PC-3 (cell line): ENCODE measurements at regions of chr10 and their contacts with region 1.

Region 1: GRCh38 chr10:52451817-52452216 is 137.7 kb downstream of the DKK1 start:
- DNase-seq: peak; percentile 100
- ATAC-seq: peak; percentile 65
- H3K4me3 ChIP-seq: peak overlapping the region; percentile 62
- H3K27ac ChIP-seq: peak overlapping the region; percentile 80
- H3K4me1 ChIP-seq: peaks cover 86% of the 10 kb centered on the region
- H3K27me3 ChIP-seq: no peaks in the 10 kb centered on the region
- CTCF ChIP-seq: no peak

Region 2: DNA sequence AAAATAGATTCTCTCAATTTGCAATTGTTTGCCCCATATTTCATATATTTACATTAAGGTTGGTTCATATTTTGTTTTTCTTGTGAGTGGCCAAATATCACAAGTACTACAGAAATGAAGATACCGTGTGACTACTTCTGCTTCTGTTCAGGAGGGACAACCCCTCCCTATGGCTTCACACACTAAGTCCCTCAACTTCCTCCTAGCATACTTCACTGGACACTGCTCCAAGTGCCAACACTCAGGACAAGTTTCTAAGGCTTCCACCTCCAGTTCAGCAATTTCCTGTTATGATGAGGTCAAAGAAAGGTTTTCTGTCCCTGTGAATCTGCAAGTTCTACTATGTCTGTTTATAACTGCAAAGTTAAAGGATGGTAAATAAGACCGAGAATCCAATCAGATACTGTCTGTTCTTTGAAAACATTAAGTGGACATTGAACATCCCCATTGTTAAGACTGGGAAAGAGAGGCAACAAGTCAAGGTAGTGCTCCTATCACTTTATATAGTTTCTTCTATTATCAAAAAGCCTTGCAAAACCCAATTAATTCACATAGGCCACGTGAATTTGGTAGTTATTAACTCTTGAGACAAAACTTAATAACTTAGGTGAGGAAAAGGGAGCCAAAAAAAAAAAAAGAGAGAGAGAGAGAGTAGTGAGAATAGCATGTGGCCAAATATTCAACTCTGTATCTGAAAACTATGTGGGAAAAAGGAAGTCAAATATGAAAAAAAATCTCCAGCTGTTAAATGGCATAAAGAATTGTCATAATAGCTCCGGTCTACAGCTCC is 219.1 kb before region 1 on chr10:
- CTCF ChIA-PET with region 1: no interaction called
- POLR2A ChIA-PET with region 1: no interaction called
- intact Hi-C with region 1: no loop called
- DNase-seq: peak; percentile 46
- ATAC-seq: peak; percentile 76
- H3K4me3 ChIP-seq: peak overlapping the region; percentile 61
- H3K27ac ChIP-seq: peak overlapping the region; percentile 14
- H3K4me1 ChIP-seq: peaks cover 25% of the 10 kb centered on the region
- H3K27me3 ChIP-seq: no peaks in the 10 kb centered on the region
- CTCF ChIP-seq: no peak

Region 3: GRCh38 chr10:52334595-52334994 is 117.2 kb before region 1 on chr10:
- CTCF ChIA-PET with region 1: no interaction called
- POLR2A ChIA-PET with region 1: interaction called, 25 read pairs
- intact Hi-C with region 1: no loop called
- DNase-seq: peak; percentile 93
- ATAC-seq: peak; percentile 53
- H3K4me3 ChIP-seq: 0 out of 2 replicates have a peak overlapping the region, but pooled peaks have one; percentile 0
- H3K27ac ChIP-seq: peak overlapping the region; percentile 74
- H3K4me1 ChIP-seq: peaks cover 52% of the 10 kb centered on the region
- H3K27me3 ChIP-seq: no peaks in the 10 kb centered on the region
- CTCF ChIP-seq: no peak

Region 4: GRCh38 chr10:52609071-52609470 is 157.3 kb after region 1 on chr10:
- CTCF ChIA-PET with region 1: no interaction called
- POLR2A ChIA-PET with region 1: no interaction called
- intact Hi-C with region 1: no loop called
- DNase-seq: no peak
- ATAC-seq: no peak
- H3K4me3 ChIP-seq: no peak overlapping the region
- H3K27ac ChIP-seq: no peak overlapping the region
- H3K4me1 ChIP-seq: no peaks in the 10 kb centered on the region
- H3K27me3 ChIP-seq: no peaks in the 10 kb centered on the region
- CTCF ChIP-seq: no peak

Region 5: GRCh38 chr10:52644373-52645186 is 192.8 kb after region 1 on chr10:
- CTCF ChIA-PET with region 1: no interaction called
- POLR2A ChIA-PET with region 1: no interaction called
- intact Hi-C with region 1: no loop called
- DNase-seq: peak; percentile 97
- ATAC-seq: peak; percentile 83
- H3K4me3 ChIP-seq: peak overlapping the region; percentile 18; the same call in 1 of the 2 replicates
- H3K27ac ChIP-seq: no peak overlapping the region
- H3K4me1 ChIP-seq: peaks cover 15% of the 10 kb centered on the region
- H3K27me3 ChIP-seq: no peaks in the 10 kb centered on the region
- CTCF ChIP-seq: peak; percentile 100

Region 6: DNA sequence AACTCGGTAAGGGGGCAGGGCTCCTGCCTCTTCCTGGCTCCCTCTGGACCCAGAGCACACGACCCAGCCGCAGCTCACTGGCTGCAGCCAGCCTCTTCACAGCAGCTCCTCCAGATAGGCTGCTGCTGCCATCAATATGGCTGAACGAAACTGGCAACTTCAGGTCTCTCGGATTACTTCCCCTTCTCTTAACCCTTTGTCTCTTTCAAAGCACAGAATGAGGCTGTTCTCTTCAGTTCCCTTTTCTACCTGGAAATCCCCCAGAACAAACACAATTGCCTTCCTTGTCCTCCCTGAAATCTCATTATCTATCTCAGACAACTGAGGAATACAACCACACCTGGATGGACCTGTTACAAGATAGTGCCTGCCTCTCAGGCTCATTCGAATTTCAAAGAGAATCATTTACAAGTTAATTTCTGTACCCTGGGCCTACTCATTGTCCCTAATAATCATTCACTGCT is 514.2 kb after region 1 on chr10:
- CTCF ChIA-PET with region 1: no interaction called
- POLR2A ChIA-PET with region 1: no interaction called
- intact Hi-C with region 1: no loop called
- DNase-seq: no peak
- ATAC-seq: no peak
- H3K4me3 ChIP-seq: no peak overlapping the region
- H3K27ac ChIP-seq: no peak overlapping the region
- H3K4me1 ChIP-seq: no peaks in the 10 kb centered on the region
- H3K27me3 ChIP-seq: no peaks in the 10 kb centered on the region
- CTCF ChIP-seq: no peak